GM12878 (cell line): ENCODE measurements at regions of chr3 and their contacts with region 1.

Region 1: GRCh38 chr3:172106989-172107388 is 67.6 kb downstream of the FNDC3B start:
- DNase-seq: peak; percentile 70
- ATAC-seq: peak; percentile 67
- H3K4me3 ChIP-seq: peak overlapping the region; percentile 20; the same call in 1 of the 2 replicates
- H3K27ac ChIP-seq: peak overlapping the region; percentile 81
- H3K4me1 ChIP-seq: peaks cover 53% of the 10 kb centered on the region
- H3K27me3 ChIP-seq: no peaks in the 10 kb centered on the region
- CTCF ChIP-seq: no peak
- EP300 ChIP-seq: peak in 1 of 2 experiments; percentile 74; a peak in 2 of 4 replicates
- POLR2A ChIP-seq: no peak
- RAD21 ChIP-seq: no peak

Region 2: GRCh38 chr3:171690281-171690680 is 416.7 kb before region 1 on chr3:
- CTCF ChIA-PET with region 1: no interaction called
- POLR2A ChIA-PET with region 1: interaction called, 17 read pairs
- RAD21 ChIA-PET with region 1: no interaction called
- SMC1A ChIA-PET with region 1: no interaction called
- in situ Hi-C with region 1: no loop called
- intact Hi-C with region 1: no loop called
- DNase-seq: peak; percentile 21
- ATAC-seq: peak; percentile 74
- H3K4me3 ChIP-seq: no peak overlapping the region
- H3K27ac ChIP-seq: peak overlapping the region; percentile 23
- H3K4me1 ChIP-seq: peaks cover 3% of the 10 kb centered on the region; the same call in 1 of the 2 replicates
- H3K27me3 ChIP-seq: no peaks in the 10 kb centered on the region
- CTCF ChIP-seq: no peak
- EP300 ChIP-seq: no peak
- POLR2A ChIP-seq: no peak
- RAD21 ChIP-seq: no peak

Region 3: GRCh38 chr3:172054115-172054764 is 52.7 kb before region 1 on chr3:
- CTCF ChIA-PET with region 1: no interaction called
- POLR2A ChIA-PET with region 1: interaction called, 3 read pairs
- RAD21 ChIA-PET with region 1: interaction called, 9 read pairs
- SMC1A ChIA-PET with region 1: interaction called, 10 read pairs
- in situ Hi-C with region 1: no loop called
- intact Hi-C with region 1: no loop called
- DNase-seq: no peak
- ATAC-seq: peak; percentile 29
- H3K4me3 ChIP-seq: no peak overlapping the region
- H3K27ac ChIP-seq: no peak overlapping the region
- H3K4me1 ChIP-seq: peaks cover 12% of the 10 kb centered on the region
- H3K27me3 ChIP-seq: no peaks in the 10 kb centered on the region
- CTCF ChIP-seq: no peak
- EP300 ChIP-seq: no peak
- POLR2A ChIP-seq: no peak
- RAD21 ChIP-seq: no peak

Region 4: DNA sequence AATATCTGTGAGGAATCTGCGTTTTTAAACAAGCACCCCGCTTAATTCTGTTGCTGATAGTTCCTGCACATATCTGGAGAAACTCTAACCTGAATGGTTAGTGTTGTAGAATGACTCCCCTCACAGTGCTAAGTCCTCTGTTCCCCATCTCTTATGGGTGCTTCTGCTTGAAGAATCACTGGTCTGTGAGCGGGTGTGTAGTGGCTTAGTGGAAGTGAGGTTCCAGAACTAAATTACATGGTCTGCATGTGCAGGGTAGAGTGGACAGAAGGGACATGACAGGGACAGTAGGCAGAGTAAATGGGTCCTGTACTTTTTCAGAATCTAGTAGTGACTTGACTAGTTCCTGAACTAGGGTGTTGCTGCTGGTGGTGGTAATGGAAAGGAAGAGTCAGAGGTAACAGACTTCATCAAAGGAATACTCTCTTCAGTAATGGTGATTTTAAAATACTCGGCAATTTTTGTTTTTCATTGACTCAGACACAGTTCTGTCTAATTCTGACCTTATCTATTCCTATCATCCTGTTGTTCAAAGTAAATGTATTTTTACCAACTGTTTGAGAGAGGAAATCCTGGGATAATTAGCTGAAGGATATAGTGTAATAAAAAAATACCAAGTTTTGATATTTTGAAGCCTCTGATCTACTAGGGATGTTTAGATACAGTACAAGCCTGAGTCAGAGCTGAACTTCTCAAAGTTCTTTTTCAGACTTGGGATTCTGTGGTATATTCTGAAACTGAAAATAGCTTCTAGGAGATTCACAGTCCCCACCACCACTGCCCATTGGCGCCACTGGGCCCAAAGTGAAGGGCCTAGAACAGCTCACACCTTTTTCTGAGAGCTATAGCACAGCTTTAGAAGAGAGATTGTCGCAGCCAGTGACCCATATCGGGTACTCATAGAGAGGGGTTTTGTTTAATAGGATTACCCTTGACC is 12.1 kb before region 1 on chr3:
- CTCF ChIA-PET with region 1: interaction called, 10 read pairs
- POLR2A ChIA-PET with region 1: interaction called, 10 read pairs
- RAD21 ChIA-PET with region 1: interaction called, 13 read pairs
- SMC1A ChIA-PET with region 1: interaction called, 169 read pairs
- in situ Hi-C with region 1: no loop called
- intact Hi-C with region 1: no loop called
- DNase-seq: peak; percentile 62
- ATAC-seq: peak; percentile 96
- H3K4me3 ChIP-seq: no peak overlapping the region
- H3K27ac ChIP-seq: peak overlapping the region; percentile 54
- H3K4me1 ChIP-seq: peaks cover 35% of the 10 kb centered on the region
- H3K27me3 ChIP-seq: no peaks in the 10 kb centered on the region
- CTCF ChIP-seq: peak; percentile 8 to 31 (median 29); a peak in 4 of 6 replicates
- EP300 ChIP-seq: no peak; a peak in 1 of 4 replicates
- POLR2A ChIP-seq: no peak
- RAD21 ChIP-seq: peak; percentile 44

Region 5: DNA sequence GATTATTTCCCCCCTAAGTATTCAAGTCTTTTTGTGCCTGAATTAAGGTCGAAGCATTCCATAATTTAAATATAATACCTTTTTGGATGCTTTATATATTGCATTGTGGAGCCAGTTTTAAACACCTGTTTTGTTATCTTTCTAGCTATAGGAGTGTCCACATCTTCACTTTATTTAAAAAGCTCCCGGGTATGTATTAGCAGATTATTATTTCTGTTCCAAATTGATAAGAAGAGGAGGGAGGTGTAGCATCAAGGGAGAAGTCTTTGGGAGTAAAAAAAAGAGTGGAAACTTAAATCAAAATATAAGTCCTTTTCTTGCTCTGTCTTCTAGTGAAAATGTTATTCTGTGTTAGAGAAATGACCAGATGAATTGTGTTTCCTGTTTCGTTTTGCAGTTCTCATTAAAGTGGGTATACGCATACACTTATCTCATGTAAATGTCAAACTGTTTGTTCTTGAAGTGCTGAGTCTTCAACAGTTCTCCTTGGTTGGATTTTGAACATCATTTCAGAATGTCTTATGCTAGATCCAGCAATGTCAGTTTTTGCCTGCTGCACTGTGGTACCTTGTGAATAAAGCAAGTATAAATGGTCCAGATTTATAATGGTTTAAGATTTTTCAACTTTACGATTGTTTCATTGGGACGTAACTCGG is 38.2 kb after region 1 on chr3:
- CTCF ChIA-PET with region 1: interaction called, 30 read pairs
- POLR2A ChIA-PET with region 1: interaction called, 13 read pairs
- RAD21 ChIA-PET with region 1: interaction called, 92 read pairs
- SMC1A ChIA-PET with region 1: interaction called, 71 read pairs
- in situ Hi-C with region 1: no loop called
- intact Hi-C with region 1: loop called (anchors 1 kb)
- DNase-seq: peak; percentile 60
- ATAC-seq: peak; percentile 57
- H3K4me3 ChIP-seq: no peak overlapping the region
- H3K27ac ChIP-seq: peak overlapping the region; percentile 48
- H3K4me1 ChIP-seq: peaks cover 66% of the 10 kb centered on the region
- H3K27me3 ChIP-seq: no peaks in the 10 kb centered on the region
- CTCF ChIP-seq: no peak
- EP300 ChIP-seq: peak in 1 of 2 experiments; percentile 8; a peak in 1 of 4 replicates
- POLR2A ChIP-seq: no peak
- RAD21 ChIP-seq: no peak; the same call in 1 of the 2 replicates

Region 6: GRCh38 chr3:172276105-172276504 is 169.1 kb after region 1 on chr3:
- CTCF ChIA-PET with region 1: interaction called, 4 read pairs
- POLR2A ChIA-PET with region 1: no interaction called
- RAD21 ChIA-PET with region 1: interaction called, 10 read pairs
- SMC1A ChIA-PET with region 1: interaction called, 10 read pairs
- in situ Hi-C with region 1: no loop called
- intact Hi-C with region 1: no loop called
- DNase-seq: no peak
- ATAC-seq: peak; percentile 36; the same call in 1 of the 3 replicates
- H3K4me3 ChIP-seq: no peak overlapping the region
- H3K27ac ChIP-seq: no peak overlapping the region
- H3K4me1 ChIP-seq: peaks cover 12% of the 10 kb centered on the region
- H3K27me3 ChIP-seq: no peaks in the 10 kb centered on the region
- CTCF ChIP-seq: peak in 2 of 3 experiments; percentile 15 to 33; a peak in 4 of 6 replicates
- EP300 ChIP-seq: no peak
- POLR2A ChIP-seq: no peak
- RAD21 ChIP-seq: peak; percentile 61